ENCODE measurements at regions of chr13 and their contacts with region 1.

Region 1: DNA sequence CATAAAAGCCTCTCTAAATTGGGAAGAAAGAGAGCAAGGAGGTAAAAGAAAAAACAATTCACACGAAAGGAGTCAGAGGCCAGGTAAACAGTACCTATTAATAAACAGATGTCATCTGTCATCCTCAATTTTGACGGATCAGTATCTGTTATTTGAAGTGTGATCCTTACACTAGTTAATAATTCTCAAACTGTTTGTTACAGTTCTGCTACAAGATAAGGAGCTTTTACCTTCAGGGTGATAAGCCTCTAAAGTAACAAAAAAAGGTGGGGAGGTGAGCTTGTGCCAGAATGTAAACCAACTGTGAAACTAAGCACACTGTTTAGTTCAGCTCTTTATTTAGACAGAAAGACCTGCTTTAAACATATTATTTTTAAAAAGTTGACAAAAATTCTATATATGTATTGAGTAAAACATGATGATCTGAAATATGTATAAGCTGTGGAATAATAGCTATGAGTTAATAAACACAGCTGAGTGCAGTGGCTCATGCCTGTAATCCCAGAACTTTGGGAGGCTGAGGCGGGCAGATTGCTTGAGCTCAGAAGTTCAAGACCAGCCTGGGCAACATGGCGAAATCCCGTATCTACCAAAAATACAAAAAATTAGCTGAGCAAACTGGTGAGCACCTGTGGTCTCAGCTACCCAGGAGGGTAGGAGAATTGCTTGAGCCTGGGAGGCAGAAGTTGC is 48.4 kb upstream of the EBPL start:
- DNase-seq: no peak
- H3K4me3 Mint-ChIP-seq: no peak overlapping the region
- H3K27ac Mint-ChIP-seq: no peak overlapping the region
- H3K4me1 Mint-ChIP-seq: no peaks in the 10 kb centered on the region
- H3K27me3 Mint-ChIP-seq: no peaks in the 10 kb centered on the region
- CTCF ChIP-seq: no peak

Region 2: DNA sequence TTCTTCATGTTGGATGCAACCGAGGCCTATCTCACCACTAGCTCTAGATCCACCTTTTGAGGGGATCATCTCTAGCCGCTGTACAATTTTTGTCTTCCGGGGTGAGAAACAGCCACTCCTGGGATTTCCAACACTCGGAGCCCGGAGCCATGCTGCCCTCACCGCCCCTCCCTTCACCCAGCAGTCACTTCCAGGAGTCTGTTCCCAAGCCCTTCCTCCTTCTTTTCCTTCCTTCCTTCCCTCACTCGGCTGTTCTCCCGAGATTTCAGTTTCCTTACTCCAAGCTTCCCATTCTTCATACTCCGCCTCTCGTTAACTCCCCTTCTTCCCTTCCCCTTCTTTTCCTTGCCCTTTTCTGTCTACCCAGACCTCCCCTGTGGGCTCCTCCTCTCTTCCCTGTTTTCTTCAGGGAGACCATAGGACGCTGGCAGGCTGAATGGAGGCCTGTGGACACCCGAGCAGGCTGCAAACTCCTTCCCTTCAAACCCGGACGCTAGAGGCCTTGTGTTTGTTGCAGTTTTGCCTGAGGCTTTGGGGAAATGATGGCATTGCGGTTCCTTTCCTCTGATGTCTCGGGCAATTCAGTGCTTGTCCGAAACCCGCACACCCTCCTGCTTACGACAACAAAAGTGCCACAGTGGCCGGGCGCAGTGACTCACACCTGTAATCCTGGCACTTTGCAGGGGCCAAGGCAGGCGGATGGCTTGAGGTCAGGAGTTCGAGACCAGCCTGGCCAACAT is 391.8 kb before region 1 on chr13:
- CTCF ChIA-PET with region 1: no interaction called
- intact Hi-C with region 1: no loop called
- DNase-seq: no peak
- H3K4me3 Mint-ChIP-seq: no peak overlapping the region
- H3K27ac Mint-ChIP-seq: no peak overlapping the region
- H3K4me1 Mint-ChIP-seq: no peaks in the 10 kb centered on the region
- H3K27me3 Mint-ChIP-seq: no peaks in the 10 kb centered on the region
- CTCF ChIP-seq: no peak

Region 3: GRCh38 chr13:49784886-49785570 is 45.4 kb after region 1 on chr13:
- CTCF ChIA-PET with region 1: no interaction called
- intact Hi-C with region 1: loop called (anchors 5 kb)
- DNase-seq: no peak
- H3K4me3 Mint-ChIP-seq: no peak overlapping the region
- H3K27ac Mint-ChIP-seq: no peak overlapping the region
- H3K4me1 Mint-ChIP-seq: peaks cover 29% of the 10 kb centered on the region
- H3K27me3 Mint-ChIP-seq: no peaks in the 10 kb centered on the region
- CTCF ChIP-seq: no peak

Region 4: DNA sequence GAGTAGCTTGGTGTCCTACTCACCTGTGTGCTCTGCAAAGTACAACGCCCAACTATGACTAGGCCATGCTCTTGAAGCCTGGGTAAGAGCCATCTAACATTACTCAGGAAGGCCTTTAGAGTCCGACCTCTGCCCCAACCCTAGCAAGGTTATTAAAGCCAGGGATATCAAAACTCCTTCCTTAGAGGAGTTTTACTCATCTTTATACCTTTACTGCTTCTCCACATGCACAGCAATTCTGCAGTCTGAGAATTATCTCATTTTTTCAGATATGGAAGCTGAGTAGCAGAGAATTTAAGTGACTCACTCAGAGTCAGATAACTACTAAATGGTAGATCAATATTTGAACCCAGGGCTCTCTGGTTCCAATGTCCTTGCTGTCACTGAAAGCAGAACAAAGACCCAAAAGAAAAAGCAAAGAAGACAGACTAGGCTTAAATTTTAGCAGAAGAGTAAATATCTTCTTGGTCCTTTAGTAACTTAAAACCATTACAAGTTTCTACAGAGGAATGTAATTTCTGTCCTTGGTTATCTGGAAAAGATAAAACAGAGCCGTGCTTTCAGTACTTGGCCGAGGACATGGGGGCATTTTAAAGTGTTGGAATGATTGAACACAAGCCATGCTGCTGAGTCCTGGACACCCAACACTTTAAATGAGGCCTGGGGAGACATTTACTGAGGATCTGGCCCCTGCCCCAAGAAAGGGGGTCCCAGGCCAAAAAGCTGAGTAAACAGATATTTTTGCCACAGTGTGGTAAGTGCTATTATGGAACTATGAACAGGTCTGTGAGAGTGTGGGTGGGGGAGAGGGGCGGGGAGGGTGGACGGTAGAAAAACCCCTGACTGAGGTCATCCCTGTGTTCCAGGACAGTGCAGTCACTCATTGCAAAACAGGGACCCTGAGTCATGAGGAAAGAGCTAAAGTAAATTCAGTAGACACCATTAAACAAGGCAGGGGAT is 71.2 kb after region 1 on chr13:
- CTCF ChIA-PET with region 1: no interaction called
- intact Hi-C with region 1: no loop called
- DNase-seq: no peak
- H3K4me3 Mint-ChIP-seq: no peak overlapping the region
- H3K27ac Mint-ChIP-seq: no peak overlapping the region
- H3K4me1 Mint-ChIP-seq: peaks cover 8% of the 10 kb centered on the region
- H3K27me3 Mint-ChIP-seq: no peaks in the 10 kb centered on the region
- CTCF ChIP-seq: no peak